ENCODE measurements at regions of chr5 and their contacts with region 1.

Region 1: DNA sequence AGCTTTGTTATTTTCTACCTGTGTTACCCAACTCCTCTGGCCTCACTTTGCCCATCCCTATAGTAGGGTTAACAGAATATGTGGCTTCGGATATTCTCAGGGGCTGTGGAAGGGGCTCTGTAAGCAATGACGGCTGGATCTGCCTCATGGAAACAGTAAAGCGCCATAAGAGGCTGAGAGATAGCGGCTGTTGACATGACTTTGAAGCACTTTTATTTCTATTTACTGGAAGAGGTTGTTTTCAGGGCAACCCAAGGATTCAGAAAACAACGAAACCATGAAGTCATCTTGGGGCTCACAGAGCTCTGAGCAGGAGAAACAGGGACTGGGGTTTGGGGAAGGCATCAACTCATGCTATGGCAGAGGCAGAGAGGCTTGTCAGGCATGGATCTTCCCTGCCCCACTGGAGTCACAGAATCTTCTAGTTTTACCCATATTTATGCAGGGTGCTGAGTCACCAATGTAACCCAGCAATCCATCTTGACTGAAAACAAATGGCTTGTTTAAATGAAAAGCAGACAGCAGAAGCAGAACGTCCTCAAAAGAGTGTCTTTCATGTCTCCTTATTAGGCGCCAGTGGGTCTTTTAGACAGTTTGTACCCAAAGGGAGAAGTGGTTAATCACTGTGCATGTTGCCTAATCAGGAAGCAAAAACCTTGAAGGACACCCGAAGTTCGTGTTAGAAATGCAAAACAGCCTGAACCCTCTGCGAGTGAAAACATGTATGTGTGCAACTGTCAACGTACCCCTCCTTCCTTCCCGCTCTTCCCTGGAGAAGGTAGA is 113.0 kb downstream of the COL23A1 start:
- DNase-seq: no peak

Region 2: DNA sequence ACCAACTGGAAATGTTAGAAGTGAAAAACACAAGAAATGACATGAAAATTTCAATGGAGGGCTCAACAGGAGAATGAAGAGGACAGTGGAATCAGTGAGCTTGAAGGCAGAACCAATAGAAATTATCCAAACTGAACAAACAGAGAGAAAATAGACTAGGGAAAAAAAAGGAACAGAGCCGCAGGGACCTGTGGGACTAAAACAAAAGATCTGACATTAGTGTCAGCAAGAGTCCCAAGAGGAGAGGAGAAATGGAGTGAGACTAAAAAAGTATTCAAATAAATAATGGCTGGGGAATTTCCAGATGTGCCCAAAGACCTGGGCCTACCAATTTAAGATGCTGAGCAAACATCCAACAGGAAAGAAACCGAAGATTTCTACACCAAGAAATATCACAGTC is 69.5 kb before region 1 on chr5:
- intact Hi-C with region 1: loop called in 1 of 2 experiments (anchors 1 kb)
- DNase-seq: no peak

Measured in posterior vena cava (tissue), 2 donors.